ENCODE measurements at regions of chr7 and their contacts with region 1.

Region 1: DNA sequence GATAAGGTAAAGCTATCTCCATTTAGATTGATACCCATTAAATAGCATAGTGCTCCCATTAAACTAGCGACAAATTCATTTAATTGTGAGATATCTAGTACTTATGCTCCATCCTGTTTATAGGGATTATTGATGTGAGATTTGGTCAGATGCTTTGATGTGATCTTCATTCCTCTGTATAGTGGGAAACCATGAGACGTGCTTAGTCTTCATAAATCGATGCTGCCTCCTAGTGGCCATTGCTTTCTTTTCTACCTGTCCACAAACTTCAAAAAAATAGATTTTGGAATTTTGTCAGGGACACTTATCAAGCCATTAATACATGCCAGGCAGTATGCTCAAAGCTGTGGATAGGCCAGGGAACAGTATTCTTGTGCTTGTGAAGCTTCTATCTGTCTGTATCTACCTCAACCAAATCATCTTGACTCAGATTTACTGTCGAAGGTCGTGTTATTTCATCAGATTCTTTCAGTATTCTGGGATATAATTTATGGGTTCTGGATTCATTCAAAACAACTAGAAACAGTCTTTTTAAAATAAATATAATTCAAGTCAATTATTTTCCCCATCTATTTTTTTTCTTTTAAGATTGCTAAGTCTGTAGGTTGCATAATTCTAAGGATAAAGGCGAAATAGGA is 12.0 kb downstream of the LSM8 start:
- DNase-seq: peak in 7 of 9 experiments; percentile 9 to 78 (median 63)
- ATAC-seq: peak; percentile 83
- H3K4me3 ChIP-seq: no peak overlapping the region
- H3K4me3 Mint-ChIP-seq: no peak overlapping the region
- H3K27ac ChIP-seq: no peak overlapping the region
- H3K27ac Mint-ChIP-seq: peak overlapping the region; percentile 19
- H3K4me1 ChIP-seq: no peaks in the 10 kb centered on the region
- H3K4me1 Mint-ChIP-seq: peaks cover 6% of the 10 kb centered on the region
- H3K27me3 ChIP-seq: no peaks in the 10 kb centered on the region
- H3K27me3 Mint-ChIP-seq: no peaks in the 10 kb centered on the region
- CTCF ChIP-seq: peak; percentile 73

Region 2: DNA sequence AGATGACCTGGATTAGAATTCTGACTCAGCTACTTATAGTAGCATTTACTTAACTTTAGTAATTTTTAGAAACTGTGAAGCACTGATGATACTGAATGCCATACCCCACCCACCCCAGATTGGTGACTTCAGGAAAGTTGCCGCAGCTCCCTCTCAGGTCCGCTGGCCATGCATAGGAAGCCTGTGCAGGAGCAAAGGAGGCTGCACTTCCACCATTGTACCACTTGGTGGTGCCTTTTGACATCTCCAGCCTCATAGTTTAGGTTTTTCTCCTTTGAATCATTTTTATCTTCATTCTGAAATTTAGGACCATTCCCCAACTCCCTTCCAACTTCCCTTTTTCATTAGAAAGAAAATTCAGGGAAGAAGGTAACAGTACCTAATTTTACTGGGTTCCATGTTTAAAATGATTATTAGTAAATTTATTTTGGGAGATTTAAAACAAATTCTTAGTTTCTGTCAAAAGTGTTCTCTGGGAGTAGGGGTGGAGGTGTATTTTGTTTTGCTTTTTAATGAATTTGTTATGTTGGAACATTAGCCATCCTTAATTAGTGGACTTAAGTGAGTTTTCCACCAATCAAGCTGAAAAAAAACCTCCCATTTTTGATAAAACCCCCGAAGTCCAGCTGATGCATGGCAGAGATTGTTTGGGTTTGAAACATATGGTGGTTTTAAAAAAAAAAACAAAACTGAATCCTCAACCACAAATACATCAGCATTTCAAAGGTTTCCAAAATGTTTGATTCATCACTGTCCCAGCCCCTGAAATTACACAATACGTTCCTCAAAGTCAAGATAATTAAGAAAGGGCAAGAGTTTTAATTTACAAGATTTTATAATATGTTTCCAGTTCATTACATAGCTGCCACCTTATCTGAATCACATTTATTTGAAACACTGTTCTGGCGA is 982.7 kb before region 1 on chr7:
- CTCF ChIA-PET with region 1: interaction called, 8 read pairs
- POLR2A ChIA-PET with region 1: no interaction called
- intact Hi-C with region 1: loop called (anchors 2 kb)
- DNase-seq: peak in 7 of 9 experiments; percentile 9 to 53 (median 31)
- ATAC-seq: peak; percentile 57
- H3K4me3 ChIP-seq: no peak overlapping the region
- H3K4me3 Mint-ChIP-seq: no peak overlapping the region
- H3K27ac ChIP-seq: no peak overlapping the region
- H3K27ac Mint-ChIP-seq: no peak overlapping the region
- H3K4me1 ChIP-seq: no peaks in the 10 kb centered on the region
- H3K4me1 Mint-ChIP-seq: no peaks in the 10 kb centered on the region
- H3K27me3 ChIP-seq: no peaks in the 10 kb centered on the region
- H3K27me3 Mint-ChIP-seq: no peaks in the 10 kb centered on the region
- CTCF ChIP-seq: peak; percentile 89

Region 3: DNA sequence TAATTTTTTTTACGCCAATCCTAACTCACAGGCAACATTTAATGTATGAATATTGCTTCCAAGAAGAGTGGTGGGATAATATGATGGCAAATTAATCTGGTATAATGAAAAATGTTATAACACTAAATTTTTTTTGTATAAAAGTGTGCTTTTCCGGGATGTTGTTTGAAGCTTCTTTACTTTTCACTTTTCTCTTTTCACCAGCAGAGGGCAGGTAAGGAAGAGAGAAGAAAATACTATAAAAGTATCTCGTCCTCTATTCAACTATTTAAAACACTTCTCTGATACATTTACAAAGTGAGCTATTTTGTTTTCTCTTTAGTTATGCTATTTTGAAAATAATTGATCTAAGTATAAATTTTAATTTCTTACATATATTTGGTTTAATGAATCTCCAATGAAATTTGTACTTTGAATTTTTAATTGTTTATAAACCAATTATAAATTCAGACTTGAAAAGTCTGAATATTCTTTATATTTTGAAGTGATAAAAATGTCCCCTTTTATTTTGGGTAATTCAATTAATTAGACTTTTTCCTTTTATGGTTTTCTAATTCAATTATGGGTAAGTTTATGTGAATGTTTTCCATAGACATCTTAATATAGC is 736.9 kb before region 1 on chr7:
- CTCF ChIA-PET with region 1: no interaction called
- POLR2A ChIA-PET with region 1: no interaction called
- intact Hi-C with region 1: loop called in 1 of 2 experiments (anchors 5 kb)
- DNase-seq: no peak
- ATAC-seq: no peak
- H3K4me3 ChIP-seq: no peak overlapping the region
- H3K4me3 Mint-ChIP-seq: no peak overlapping the region
- H3K27ac ChIP-seq: no peak overlapping the region
- H3K27ac Mint-ChIP-seq: no peak overlapping the region
- H3K4me1 ChIP-seq: no peaks in the 10 kb centered on the region
- H3K4me1 Mint-ChIP-seq: no peaks in the 10 kb centered on the region
- H3K27me3 ChIP-seq: no peaks in the 10 kb centered on the region
- H3K27me3 Mint-ChIP-seq: no peaks in the 10 kb centered on the region
- CTCF ChIP-seq: no peak

Measured in CD8-positive, alpha-beta T cell (primary cell).